Heart left ventricle (tissue), 16 donors: ENCODE measurements at regions of chr3 and their contacts with region 1.

Region 1: DNA sequence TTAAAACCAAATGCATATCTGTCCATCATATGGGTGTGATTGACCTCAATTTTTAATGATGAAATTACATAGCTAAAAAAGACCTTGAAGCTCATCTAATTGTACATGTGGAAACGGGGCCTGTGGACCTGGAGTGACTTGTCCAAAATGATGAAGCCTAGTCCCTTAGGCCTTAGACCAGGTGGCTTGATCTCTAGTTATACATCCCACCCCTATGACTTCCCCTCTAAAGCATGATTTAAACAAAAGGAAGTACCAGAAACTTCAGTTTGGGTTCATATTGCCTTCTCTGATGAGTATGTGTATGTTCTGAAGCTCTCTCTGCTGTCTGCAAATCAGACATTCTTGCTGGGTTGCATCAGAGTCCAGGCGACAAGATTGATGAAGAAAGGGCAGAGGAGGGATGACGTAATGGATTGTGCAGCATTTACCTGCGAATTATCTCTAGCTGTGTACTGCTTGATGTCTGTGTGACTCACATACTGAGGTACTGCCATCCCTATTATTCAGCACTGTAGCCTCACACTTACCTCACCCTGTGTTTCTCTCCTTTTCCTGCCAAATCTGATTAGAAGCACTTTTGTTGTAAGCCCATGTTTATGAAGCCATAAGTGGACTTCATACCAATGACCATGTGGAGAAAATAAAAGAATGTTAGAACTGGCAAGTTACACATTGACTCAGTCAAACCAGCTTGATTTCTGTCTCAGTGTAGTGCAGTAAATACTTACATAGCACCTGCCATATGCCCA is 111.5 kb downstream of the FILIP1L start:
- DNase-seq: no peak
- ATAC-seq: peak in 3 of 4 donors; percentile 72 to 77 (median 73)
- H3K4me3 ChIP-seq: no peak overlapping the region
- H3K27ac ChIP-seq: peak overlapping the region in 3 of 12 donors; percentile 2 to 46 (median 13)
- H3K4me1 ChIP-seq: peaks cover 10 to 53% (median 35%) of the 10 kb centered on the region in 12 donors
- H3K27me3 ChIP-seq: no peaks in the 10 kb centered on the region
- CTCF ChIP-seq: no peak
- POLR2A ChIP-seq: no peak

Region 2: GRCh38 chr3:99842826-99843589 is 159.8 kb before region 1 on chr3:
- intact Hi-C with region 1: loop called in 3 of 10 experiments (anchors 5 to 10 kb)
- DNase-seq: no peak
- ATAC-seq: peak; percentile 72 to 80 (median 74)
- H3K4me3 ChIP-seq: peak overlapping the region in 1 of 12 donors; percentile 8
- H3K27ac ChIP-seq: peak overlapping the region; percentile 53 to 83 (median 72)
- H3K4me1 ChIP-seq: peaks cover 12 to 55% (median 47%) of the 10 kb centered on the region in 12 donors
- H3K27me3 ChIP-seq: no peaks in the 10 kb centered on the region
- CTCF ChIP-seq: peak; percentile 59 to 81 (median 72)
- POLR2A ChIP-seq: no peak

Region 3: DNA sequence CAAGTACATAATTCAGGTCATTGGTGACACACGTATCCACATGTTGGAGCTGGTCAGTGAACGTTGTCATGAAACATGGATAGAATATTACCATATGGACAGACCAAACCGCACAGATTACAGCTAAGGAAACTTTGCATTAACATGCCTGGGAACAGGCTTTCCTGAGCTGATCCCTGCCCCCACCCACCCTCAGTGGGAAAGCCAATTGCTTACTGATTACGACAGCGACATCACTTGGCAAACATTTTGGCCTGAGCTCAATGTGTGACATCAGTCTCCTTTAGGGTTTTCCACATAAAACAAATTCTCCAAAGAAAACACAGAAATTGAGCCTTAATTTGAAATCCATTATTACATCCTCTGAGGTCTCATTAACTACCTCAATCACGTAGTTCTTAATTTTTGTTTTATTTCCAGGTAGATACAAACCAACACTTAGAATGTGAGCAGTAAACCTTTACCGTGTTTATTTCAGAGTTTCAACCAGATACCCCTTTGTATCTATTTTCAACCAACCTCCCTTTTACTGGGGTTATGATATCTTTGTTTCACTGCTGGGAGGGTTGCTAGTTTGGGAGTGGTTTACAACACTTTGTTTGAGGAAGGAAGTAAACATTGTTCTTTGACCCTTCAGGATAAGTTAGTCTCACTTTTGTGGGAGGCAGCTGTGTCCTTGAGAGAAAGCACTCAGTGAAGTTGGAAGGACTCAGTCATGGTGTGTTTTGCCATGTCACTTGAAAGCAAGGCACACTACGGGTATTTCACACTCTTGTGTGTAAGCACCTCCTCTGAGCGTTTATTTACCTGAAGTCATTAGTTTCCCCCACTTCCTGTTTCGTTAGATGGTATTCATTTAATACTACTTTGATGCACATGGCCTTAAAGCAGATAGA is 82.0 kb before region 1 on chr3:
- intact Hi-C with region 1: loop called in 1 of 10 experiments (anchors 5 kb)
- DNase-seq: peak; percentile 70 to 86 (median 82)
- ATAC-seq: peak; percentile 59 to 88 (median 72)
- H3K4me3 ChIP-seq: no peak overlapping the region
- H3K27ac ChIP-seq: peak overlapping the region; percentile 54 to 88 (median 78)
- H3K4me1 ChIP-seq: peaks cover 0 to 52% (median 36%) of the 10 kb centered on the region in 12 donors
- H3K27me3 ChIP-seq: no peaks in the 10 kb centered on the region
- CTCF ChIP-seq: no peak
- POLR2A ChIP-seq: no peak

Region 4: DNA sequence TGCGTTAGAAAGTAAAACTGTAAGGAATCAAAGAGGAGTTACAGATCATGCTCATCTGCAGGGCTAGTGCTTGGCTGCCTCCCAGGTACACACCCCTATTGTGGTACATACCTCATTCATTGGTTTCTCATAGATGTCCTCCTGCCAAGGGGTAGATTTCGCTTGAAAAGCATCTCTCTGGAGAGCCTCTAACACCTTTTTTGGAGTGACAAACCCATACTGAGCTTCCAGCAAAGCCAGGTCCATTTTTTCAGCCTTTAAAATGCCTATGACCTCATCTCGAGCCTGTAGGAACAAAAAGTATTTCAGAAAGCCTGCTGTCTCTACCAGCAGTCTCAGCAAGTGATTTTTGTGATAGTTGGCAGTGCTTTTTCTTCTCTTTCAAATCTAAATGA is 73.0 kb before region 1 on chr3:
- intact Hi-C with region 1: loop called in 1 of 10 experiments (anchors 5 kb)
- DNase-seq: peak in 2 of 5 donors; percentile 23 to 46
- ATAC-seq: peak; percentile 40 to 56 (median 45)
- H3K4me3 ChIP-seq: peak overlapping the region in 1 of 12 donors; percentile 3
- H3K27ac ChIP-seq: peak overlapping the region; percentile 12 to 77 (median 52)
- H3K4me1 ChIP-seq: peaks cover 0 to 62% (median 35%) of the 10 kb centered on the region in 12 donors
- H3K27me3 ChIP-seq: no peaks in the 10 kb centered on the region
- CTCF ChIP-seq: no peak
- POLR2A ChIP-seq: no peak

Region 5: GRCh38 chr3:99938270-99938911 is 64.4 kb before region 1 on chr3:
- intact Hi-C with region 1: loop called in 7 of 10 experiments (anchors 5 to 10 kb)
- DNase-seq: no peak
- ATAC-seq: no peak
- H3K4me3 ChIP-seq: no peak overlapping the region
- H3K27ac ChIP-seq: peak overlapping the region in 7 of 12 donors; percentile 4 to 77 (median 58)
- H3K4me1 ChIP-seq: peaks cover 4 to 52% (median 43%) of the 10 kb centered on the region in 12 donors
- H3K27me3 ChIP-seq: no peaks in the 10 kb centered on the region
- CTCF ChIP-seq: no peak
- POLR2A ChIP-seq: no peak

Region 6: GRCh38 chr3:99945328-99945995 is 57.3 kb before region 1 on chr3:
- intact Hi-C with region 1: loop called in 2 of 10 experiments (anchors 10 kb)
- DNase-seq: peak in 2 of 5 donors; percentile 37 to 41
- ATAC-seq: peak; percentile 44 to 62 (median 54)
- H3K4me3 ChIP-seq: no peak overlapping the region
- H3K27ac ChIP-seq: peak overlapping the region in 10 of 12 donors; percentile 3 to 79 (median 28)
- H3K4me1 ChIP-seq: peaks cover 0 to 52% (median 39%) of the 10 kb centered on the region in 12 donors
- H3K27me3 ChIP-seq: no peaks in the 10 kb centered on the region
- CTCF ChIP-seq: no peak
- POLR2A ChIP-seq: no peak

Region 7: DNA sequence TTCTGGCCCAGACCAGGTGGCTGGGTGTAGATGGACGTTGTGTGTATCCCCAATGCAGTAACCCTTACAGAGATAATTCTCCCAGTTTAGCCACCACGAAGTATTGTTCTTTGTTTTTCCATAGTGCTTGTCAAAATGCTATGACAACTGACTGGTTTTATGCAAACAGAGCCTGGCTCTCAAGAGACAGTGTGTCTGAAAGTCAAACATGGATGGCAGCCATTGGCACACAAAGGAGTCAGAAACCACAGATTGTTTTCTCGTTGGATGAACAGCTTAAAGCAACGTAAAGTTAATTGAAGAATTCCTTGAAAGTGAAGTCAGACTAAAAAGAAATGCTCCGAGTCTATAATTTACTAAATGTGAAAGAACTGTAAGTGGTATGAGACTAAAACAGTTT is 20.4 kb after region 1 on chr3:
- intact Hi-C with region 1: no loop called
- DNase-seq: no peak
- ATAC-seq: no peak
- H3K4me3 ChIP-seq: no peak overlapping the region
- H3K27ac ChIP-seq: peak overlapping the region in 2 of 12 donors; percentile 14 to 62
- H3K4me1 ChIP-seq: peaks cover 0 to 35% (median 14%) of the 10 kb centered on the region in 12 donors
- H3K27me3 ChIP-seq: no peaks in the 10 kb centered on the region
- CTCF ChIP-seq: no peak
- POLR2A ChIP-seq: no peak

Region 8: GRCh38 chr3:100047455-100048141 is 44.8 kb after region 1 on chr3:
- intact Hi-C with region 1: loop called in 3 of 10 experiments (anchors 5 kb)
- DNase-seq: no peak
- ATAC-seq: peak; percentile 27 to 62 (median 40)
- H3K4me3 ChIP-seq: peak overlapping the region in 1 of 12 donors; percentile 18
- H3K27ac ChIP-seq: peak overlapping the region; percentile 10 to 92 (median 76)
- H3K4me1 ChIP-seq: peaks cover 2 to 62% (median 33%) of the 10 kb centered on the region in 12 donors
- H3K27me3 ChIP-seq: no peaks in the 10 kb centered on the region
- CTCF ChIP-seq: no peak
- POLR2A ChIP-seq: no peak